ENCODE measurements at regions of chr19 and their contacts with region 1.

Region 1: GRCh38 chr19:50511068-50511822 is at the start of gene JOSD2:
- DNase-seq: peak; percentile 94 to 100 (median 96)
- ATAC-seq: peak; percentile 91
- H3K4me3 ChIP-seq: peak within 1 kb of the TSS; percentile 75 to 93
- H3K4me3 Mint-ChIP-seq: peak within 1 kb of the TSS; percentile 91
- H3K27ac ChIP-seq: peak within 1 kb of the TSS; percentile 90 to 92
- H3K27ac Mint-ChIP-seq: peak within 1 kb of the TSS; percentile 99
- H3K4me1 ChIP-seq: peaks cover 16% of the 10 kb centered on the region
- H3K4me1 Mint-ChIP-seq: peaks cover 16% of the 10 kb centered on the region
- H3K27me3 ChIP-seq: no peaks in the 10 kb centered on the region
- H3K27me3 Mint-ChIP-seq: peaks cover 4% of the 10 kb centered on the region
- CTCF ChIP-seq: no peak
- total RNA-seq, gene JOSD2: 8.8 to 9.9 TPM

Region 2: DNA sequence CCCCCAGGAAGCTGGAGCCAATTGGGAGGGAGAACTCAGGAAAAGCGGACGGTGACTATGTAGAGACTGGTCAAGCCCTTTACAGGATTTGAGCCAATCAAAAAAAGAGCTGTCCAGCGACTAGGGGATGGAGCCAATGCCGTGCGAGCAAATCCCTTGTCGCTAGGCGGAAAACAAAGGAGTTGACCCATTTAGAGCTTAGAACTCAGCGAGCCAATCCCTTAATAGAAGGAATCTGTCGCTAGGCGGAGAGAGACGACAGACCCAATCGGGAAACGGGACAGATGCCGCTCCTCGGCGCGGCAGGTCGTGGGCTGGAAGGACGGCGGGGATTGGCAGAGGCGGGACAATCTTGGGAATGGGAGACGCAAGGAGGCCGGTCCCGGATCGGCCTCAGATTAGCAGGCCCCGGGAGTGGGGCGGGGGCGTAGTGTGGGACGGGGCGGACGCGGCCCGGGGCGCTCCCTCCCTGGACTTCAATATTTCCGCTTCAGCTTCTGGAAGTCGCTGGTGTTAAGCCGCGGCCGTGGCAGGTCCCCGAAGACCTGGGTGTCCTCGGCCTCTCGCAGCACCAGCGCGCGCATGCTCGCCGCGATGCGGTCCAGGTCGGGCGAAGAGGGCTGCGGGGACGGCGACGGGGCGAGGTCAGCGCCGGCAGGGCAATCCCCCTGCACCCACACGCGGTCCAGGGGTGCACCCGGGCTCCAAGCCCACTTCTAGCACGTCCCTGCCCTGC is 641.6 kb before region 1 on chr19:
- CTCF ChIA-PET with region 1: no interaction called
- POLR2A ChIA-PET with region 1: no interaction called
- intact Hi-C with region 1: loop called in 1 of 2 experiments (anchors 5 kb)
- DNase-seq: peak; percentile 81 to 98 (median 89)
- ATAC-seq: peak; percentile 75
- H3K4me3 ChIP-seq: peak overlapping the region; percentile 73 to 85
- H3K4me3 Mint-ChIP-seq: no peak overlapping the region
- H3K27ac ChIP-seq: peak overlapping the region; percentile 64 to 96
- H3K27ac Mint-ChIP-seq: no peak overlapping the region
- H3K4me1 ChIP-seq: peaks cover 36% of the 10 kb centered on the region
- H3K4me1 Mint-ChIP-seq: peaks cover 41% of the 10 kb centered on the region
- H3K27me3 ChIP-seq: no peaks in the 10 kb centered on the region
- H3K27me3 Mint-ChIP-seq: no peaks in the 10 kb centered on the region
- CTCF ChIP-seq: no peak

Region 3: GRCh38 chr19:50357178-50358100 is 153.8 kb before region 1 on chr19:
- CTCF ChIA-PET with region 1: interaction called, 3 read pairs
- POLR2A ChIA-PET with region 1: interaction called, 7 read pairs
- intact Hi-C with region 1: loop called (anchors 1 kb)
- DNase-seq: peak; percentile 73 to 94 (median 90)
- ATAC-seq: peak; percentile 83
- H3K4me3 ChIP-seq: peak overlapping the region; percentile 62 to 78
- H3K4me3 Mint-ChIP-seq: peak overlapping the region; percentile 89
- H3K27ac ChIP-seq: peak overlapping the region; percentile 90 to 96
- H3K27ac Mint-ChIP-seq: peak overlapping the region; percentile 96
- H3K4me1 ChIP-seq: peaks cover 20% of the 10 kb centered on the region
- H3K4me1 Mint-ChIP-seq: peaks cover 30% of the 10 kb centered on the region
- H3K27me3 ChIP-seq: no peaks in the 10 kb centered on the region
- H3K27me3 Mint-ChIP-seq: peaks cover 3% of the 10 kb centered on the region
- CTCF ChIP-seq: peak; percentile 85

Region 4: DNA sequence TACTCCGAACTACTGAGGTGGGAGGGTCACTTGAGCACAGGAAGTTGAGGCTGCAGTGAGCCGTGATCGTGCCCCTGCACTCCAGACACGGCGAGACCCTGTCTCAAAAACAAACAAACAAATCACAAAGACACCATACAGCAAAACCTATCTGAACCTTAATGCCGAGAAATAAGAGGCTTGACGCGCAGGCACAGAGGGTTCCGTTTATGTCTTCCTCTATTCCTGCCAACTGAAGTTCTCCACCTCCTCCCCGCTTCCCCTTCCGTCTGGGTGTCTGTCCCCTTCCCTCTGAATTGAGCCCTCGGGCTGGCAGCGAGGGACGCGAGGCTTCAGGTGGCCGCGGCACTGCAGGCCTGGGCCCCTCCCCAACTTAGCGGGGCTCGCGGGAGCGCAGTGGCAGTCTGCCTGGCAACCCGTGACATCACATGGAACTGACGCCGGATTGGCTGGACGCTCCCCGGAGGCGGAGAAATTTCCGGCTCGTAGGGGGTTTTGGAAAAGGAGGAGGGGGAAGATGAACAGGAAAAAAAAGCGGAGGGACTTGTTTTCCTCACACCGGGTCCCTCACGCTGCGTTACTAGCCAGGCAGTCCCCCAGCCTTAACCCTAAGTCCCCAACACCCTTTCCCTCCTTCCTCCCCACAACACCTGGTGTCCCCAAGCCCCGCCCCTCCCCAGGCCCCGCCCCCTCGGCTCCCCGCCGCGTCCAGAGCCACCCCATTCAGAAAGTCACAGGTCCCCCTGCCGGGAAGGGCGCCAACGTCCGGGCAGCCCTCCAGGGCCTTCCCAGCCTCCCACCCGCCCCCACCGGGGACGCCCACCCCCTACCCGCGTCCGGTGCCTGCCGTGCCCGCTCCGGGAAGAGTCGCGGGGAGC is 79.7 kb before region 1 on chr19:
- CTCF ChIA-PET with region 1: no interaction called
- POLR2A ChIA-PET with region 1: no interaction called
- intact Hi-C with region 1: loop called (anchors 1 to 2 kb)
- DNase-seq: peak; percentile 73 to 94 (median 89)
- ATAC-seq: peak; percentile 94
- H3K4me3 ChIP-seq: peak overlapping the region; percentile 58 to 65
- H3K4me3 Mint-ChIP-seq: peak overlapping the region; percentile 88
- H3K27ac ChIP-seq: peak overlapping the region; percentile 43 to 48
- H3K27ac Mint-ChIP-seq: peak overlapping the region; percentile 78
- H3K4me1 ChIP-seq: peaks cover 9% of the 10 kb centered on the region
- H3K4me1 Mint-ChIP-seq: peaks cover 17% of the 10 kb centered on the region
- H3K27me3 ChIP-seq: peaks cover 4 to 15% of the 10 kb centered on the region in 2 experiments
- H3K27me3 Mint-ChIP-seq: peaks cover 21% of the 10 kb centered on the region
- CTCF ChIP-seq: no peak

Region 5: DNA sequence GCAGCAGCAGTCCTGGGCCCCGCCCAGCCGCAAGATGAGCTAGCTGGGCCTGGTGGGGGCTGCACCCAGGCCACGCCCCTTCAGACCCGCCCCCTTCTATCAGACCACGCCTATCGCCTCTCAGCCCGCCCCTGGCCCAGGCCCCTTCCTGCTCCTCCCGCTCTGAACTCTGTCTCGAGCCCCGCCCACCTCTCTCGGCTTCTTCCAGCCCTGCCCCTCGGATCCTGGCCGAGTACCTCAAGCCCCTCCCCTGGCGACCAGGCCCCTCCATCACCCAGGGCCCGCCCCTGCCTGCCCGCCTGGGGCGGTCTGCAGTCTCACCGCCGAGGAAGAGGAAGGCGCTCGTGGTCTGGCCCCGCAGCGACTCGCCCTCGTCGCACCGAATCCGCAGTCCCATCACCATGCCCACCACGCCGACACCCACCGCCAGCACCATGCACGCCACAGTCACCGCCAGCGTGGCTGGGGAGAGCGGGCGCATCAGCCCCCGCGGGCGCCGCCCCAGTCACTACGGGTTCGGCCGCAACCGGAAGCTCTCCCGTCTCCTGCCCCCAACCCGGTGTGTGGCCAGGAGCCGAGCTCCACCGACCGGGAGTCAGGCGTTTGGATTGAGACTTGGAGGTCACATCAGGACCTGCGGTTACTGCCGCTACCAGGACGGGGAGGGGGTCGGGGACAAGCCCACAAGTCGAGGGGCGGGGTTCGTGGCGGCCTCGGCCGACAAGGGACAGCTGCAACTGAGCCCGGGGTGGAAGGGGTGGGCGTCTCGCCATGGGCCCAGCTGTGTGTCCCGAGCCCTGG is 856.5 kb after region 1 on chr19:
- CTCF ChIA-PET with region 1: no interaction called
- POLR2A ChIA-PET with region 1: no interaction called
- intact Hi-C with region 1: loop called in 1 of 2 experiments (anchors 10 kb)
- DNase-seq: peak; percentile 88 to 98 (median 95)
- ATAC-seq: peak; percentile 78
- H3K4me3 ChIP-seq: peak overlapping the region; percentile 74 to 77
- H3K4me3 Mint-ChIP-seq: peak overlapping the region; percentile 98
- H3K27ac ChIP-seq: peak overlapping the region; percentile 48 to 87
- H3K27ac Mint-ChIP-seq: peak overlapping the region; percentile 96
- H3K4me1 ChIP-seq: peaks cover 61% of the 10 kb centered on the region
- H3K4me1 Mint-ChIP-seq: peaks cover 72% of the 10 kb centered on the region
- H3K27me3 ChIP-seq: no peaks in the 10 kb centered on the region
- H3K27me3 Mint-ChIP-seq: no peaks in the 10 kb centered on the region
- CTCF ChIP-seq: no peak

Measured in CD8-positive, alpha-beta T cell (primary cell).